ENCODE measurements at regions of chr5 and their contacts with region 1.

Region 1: GRCh38 chr5:141430332-141431113 is at the start of gene PCDHGA12:
- DNase-seq: peak; percentile 52
- H3K4me3 ChIP-seq: peak within 1 kb of the TSS; percentile 49
- CTCF ChIP-seq: peak; percentile 38

Region 2: DNA sequence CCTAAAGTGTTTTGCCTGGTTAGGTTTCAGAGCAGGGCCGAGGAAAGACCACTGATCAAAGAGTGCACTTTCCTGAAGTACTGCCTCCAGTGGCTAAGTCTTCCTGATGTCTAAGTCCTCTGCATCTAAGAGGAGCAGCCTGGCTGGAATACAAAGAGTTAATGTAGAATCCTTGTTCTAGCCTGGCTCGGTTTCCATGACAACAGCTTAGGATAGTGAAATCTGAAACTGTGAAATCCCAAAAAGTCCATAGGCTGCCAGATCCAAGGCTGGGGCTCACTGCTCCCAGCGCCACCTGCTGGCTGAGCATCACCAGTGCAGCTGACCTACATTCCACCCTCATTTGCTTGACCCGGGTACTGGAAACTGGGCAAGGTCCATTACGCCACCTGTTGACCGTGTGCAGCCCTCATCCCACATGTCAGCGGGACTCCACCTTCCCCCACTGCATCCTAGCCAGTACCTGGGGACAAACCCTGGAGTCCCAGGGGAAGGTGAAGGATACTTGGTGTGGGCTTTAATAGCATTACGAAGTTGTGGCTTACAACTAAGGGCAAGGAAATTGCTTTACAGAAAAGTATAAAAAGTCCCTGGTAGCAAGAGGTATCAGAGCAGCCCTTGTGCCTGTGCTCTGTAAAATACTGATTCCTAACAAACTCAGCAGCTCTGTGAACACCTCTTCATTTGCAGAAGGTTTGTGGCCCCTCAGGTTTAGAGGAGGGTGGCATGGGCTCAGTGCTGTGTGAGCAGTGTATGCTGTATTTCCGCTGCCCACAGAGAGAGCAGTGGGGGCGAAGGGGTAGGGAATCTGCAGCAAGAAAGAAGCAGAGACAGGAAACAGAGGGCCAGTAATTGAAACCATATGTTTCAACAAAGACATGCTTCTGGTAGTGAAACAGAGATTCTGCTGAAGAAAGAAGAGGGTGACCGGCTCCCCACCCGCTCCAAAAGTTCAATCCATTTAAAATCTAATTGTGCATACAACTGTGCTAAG is 94.4 kb after region 1 on chr5:
- CTCF ChIA-PET with region 1: interaction called, 82 read pairs
- POLR2A ChIA-PET with region 1: interaction called, 6 read pairs
- DNase-seq: peak; percentile 76
- H3K4me3 ChIP-seq: peak overlapping the region; percentile 29
- CTCF ChIP-seq: peak; percentile 97

Measured in AG04449 (cell line).